Kidney (tissue), 22 donors: ENCODE measurements at regions of chr22 and their contacts with region 1.

Region 1: GRCh38 chr22:46355371-46355995 is 20.0 kb downstream of the TRMU start:
- DNase-seq: peak; percentile 81 to 87 (median 84)
- H3K4me3 ChIP-seq: no peak overlapping the region
- H3K27ac ChIP-seq: no peak overlapping the region
- H3K4me1 ChIP-seq: no peaks in the 10 kb centered on the region
- H3K27me3 ChIP-seq: no peaks in the 10 kb centered on the region
- CTCF ChIP-seq: peak; percentile 75

Region 2: DNA sequence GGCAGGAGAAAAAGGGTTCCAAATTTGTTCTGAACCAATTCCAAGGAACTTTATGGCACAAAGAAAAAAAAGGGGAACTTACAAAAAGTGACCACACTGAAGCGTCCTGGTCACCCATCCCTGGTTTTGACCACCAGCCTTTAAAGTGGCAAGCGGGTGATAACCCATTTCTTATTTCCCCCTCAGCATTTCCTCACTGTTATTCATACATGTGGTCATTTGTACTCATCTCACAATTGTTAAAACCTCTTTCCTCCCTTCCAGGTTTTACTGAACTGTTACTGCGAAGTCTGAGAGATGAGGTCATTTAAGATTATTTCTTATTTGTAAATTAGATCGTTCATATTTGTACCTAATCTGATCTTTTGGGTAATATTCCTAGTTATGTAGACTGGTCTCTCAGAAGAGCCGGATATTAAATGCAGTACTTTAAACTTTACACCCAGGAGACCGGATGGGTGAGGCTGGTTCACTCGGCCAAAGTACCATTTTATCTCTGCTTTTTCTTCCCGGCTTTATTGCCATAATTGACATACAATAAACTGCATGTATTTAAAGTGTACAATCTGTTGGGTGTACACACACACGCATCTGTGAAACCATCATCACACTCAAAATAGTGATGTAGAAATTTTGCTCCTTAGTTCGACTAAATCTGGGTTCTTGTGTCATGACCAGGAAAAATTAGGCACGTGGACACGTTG is 152.4 kb before region 1 on chr22:
- intact Hi-C with region 1: no loop called
- DNase-seq: no peak
- H3K4me3 ChIP-seq: no peak overlapping the region
- H3K27ac ChIP-seq: no peak overlapping the region
- H3K4me1 ChIP-seq: no peaks in the 10 kb centered on the region
- H3K27me3 ChIP-seq: no peaks in the 10 kb centered on the region
- CTCF ChIP-seq: no peak

Region 3: GRCh38 chr22:46542011-46542985 is 186.8 kb after region 1 on chr22:
- intact Hi-C with region 1: loop called (anchors 5 kb)
- DNase-seq: peak; percentile 79 to 91 (median 85)
- H3K4me3 ChIP-seq: no peak overlapping the region
- H3K27ac ChIP-seq: peak overlapping the region; percentile 37 to 85
- H3K4me1 ChIP-seq: peaks cover 0 to 16% (median 12%) of the 10 kb centered on the region in 3 donors
- H3K27me3 ChIP-seq: no peaks in the 10 kb centered on the region
- CTCF ChIP-seq: peak; percentile 87

Region 4: GRCh38 chr22:46649141-46650077 is 293.9 kb after region 1 on chr22:
- intact Hi-C with region 1: no loop called
- DNase-seq: peak in 1 of 5 donors; percentile 54
- H3K4me3 ChIP-seq: no peak overlapping the region
- H3K27ac ChIP-seq: peak overlapping the region in 1 of 2 donors; percentile 41
- H3K4me1 ChIP-seq: peaks cover 4 to 23% (median 11%) of the 10 kb centered on the region in 3 donors
- H3K27me3 ChIP-seq: no peaks in the 10 kb centered on the region
- CTCF ChIP-seq: no peak